ENCODE measurements at regions of chr12 and their contacts with region 1.

Region 1: DNA sequence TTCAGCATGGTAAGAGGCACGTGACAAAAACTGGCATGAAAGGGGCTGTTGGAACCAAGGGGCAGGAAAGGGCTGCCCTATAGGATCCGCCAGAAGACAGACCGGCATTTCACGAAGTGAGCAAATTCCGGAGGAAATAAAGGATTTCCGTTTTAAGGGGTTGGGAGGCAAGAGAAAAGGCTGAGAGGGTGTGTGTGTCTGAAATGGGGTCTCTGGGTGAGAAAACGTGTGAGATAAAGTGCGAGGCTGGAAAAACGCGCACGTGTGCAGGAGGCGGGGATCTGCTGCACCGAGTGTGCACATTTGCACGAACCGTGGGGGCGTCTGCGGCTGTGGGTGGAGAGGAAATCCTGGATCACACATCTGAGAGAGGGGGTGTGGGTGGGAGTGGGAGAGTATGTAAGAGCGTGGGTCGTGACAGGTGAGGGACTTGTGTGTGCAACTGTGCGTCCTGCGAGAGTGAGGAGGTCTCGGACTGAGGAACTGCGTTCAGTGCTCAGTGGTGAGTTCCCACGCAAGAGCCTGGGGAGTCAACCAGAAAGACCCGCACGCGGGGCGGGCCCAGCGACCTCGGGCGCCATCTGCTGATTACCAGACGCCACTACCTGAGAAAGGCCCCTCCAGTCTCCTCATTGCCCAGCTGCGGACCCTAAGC is 37.0 kb upstream of the P2RX7 start:
- DNase-seq: peak; percentile 74
- H3K4me3 Mint-ChIP-seq: peak overlapping the region; percentile 82
- H3K27ac Mint-ChIP-seq: peak overlapping the region; percentile 61
- H3K4me1 Mint-ChIP-seq: peaks cover 33% of the 10 kb centered on the region
- H3K27me3 Mint-ChIP-seq: peaks cover 4% of the 10 kb centered on the region

Region 2: DNA sequence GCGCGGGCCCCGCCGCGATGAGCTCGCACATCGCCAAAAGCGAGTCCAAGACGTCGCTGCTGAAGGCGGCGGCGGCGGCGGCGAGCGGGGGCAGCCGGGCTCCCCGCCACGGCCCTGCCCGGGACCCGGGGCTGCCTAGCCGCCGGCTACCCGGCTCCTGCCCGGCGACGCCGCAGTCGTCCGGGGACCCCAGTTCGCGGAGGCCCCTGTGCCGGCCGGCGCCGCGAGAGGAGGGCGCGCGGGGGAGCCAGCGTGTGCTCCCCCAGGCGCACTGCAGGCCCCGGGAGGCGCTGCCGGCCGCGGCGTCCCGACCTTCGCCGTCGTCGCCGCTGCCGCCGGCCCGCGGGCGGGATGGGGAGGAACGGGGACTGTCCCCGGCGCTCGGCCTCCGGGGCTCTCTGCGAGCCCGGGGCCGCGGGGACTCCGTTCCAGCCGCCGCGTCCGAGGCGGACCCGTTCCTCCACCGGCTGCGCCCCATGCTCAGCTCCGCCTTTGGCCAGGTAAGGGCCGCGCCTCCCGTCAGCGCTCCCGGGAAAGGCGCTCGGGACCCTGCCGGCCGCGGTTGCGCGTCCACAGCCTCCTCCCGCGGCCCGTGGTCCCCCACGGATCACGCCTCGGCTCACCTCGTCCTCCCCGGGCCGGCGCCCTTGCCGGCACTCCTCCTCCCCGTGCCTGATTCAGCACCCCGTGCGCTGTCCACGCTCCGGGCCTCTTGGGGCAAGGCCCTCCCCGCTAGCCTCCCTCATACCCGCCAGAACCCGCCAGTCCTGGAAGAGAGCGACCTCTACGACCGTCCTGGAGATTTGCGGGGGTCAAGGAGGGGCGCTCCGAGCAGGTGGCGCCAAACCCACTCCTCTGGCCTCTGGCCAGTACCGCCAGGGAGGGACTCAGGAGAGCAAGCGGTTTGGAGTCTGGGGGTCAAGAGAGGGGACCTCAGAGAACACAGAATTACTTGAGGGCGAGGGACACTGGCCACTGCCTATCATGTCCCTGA is 454.5 kb before region 1 on chr12:
- intact Hi-C with region 1: loop called (anchors 10 kb)
- DNase-seq: peak; percentile 49
- H3K4me3 Mint-ChIP-seq: peak overlapping the region; percentile 66
- H3K27ac Mint-ChIP-seq: no peak overlapping the region
- H3K4me1 Mint-ChIP-seq: peaks cover 10% of the 10 kb centered on the region
- H3K27me3 Mint-ChIP-seq: peaks cover 45% of the 10 kb centered on the region

Region 3: GRCh38 chr12:121005346-121005815 is 90.3 kb before region 1 on chr12:
- intact Hi-C with region 1: loop called (anchors 1 kb)
- DNase-seq: peak; percentile 32
- H3K4me3 Mint-ChIP-seq: no peak overlapping the region
- H3K27ac Mint-ChIP-seq: no peak overlapping the region
- H3K4me1 Mint-ChIP-seq: peaks cover 4% of the 10 kb centered on the region
- H3K27me3 Mint-ChIP-seq: no peaks in the 10 kb centered on the region

Region 4: DNA sequence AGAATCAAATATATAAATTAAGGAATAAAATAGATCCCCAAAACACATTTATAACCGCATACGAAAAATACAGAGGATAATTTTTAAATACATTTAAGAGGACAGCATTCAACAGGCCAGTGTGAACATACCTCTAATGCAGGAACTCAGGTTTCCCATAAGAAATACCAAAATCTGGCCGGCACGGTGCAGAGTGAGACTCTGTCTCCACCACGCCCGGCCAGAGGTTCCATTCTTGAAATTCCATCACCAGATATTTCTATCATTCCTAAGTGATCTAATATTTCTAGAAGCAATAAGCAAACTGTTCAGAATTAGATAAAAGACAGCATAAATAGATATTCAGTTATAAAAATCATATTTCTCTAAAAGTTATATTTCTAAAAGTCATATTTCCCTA is 26.5 kb before region 1 on chr12:
- intact Hi-C with region 1: no loop called
- DNase-seq: no peak
- H3K4me3 Mint-ChIP-seq: no peak overlapping the region
- H3K27ac Mint-ChIP-seq: no peak overlapping the region
- H3K4me1 Mint-ChIP-seq: peaks cover 11% of the 10 kb centered on the region
- H3K27me3 Mint-ChIP-seq: peaks cover 21% of the 10 kb centered on the region

Region 5: GRCh38 chr12:121230538-121230907 is 134.9 kb after region 1 on chr12:
- intact Hi-C with region 1: loop called (anchors 1 kb)
- DNase-seq: no peak
- H3K4me3 Mint-ChIP-seq: no peak overlapping the region
- H3K27ac Mint-ChIP-seq: no peak overlapping the region
- H3K4me1 Mint-ChIP-seq: peaks cover 18% of the 10 kb centered on the region
- H3K27me3 Mint-ChIP-seq: no peaks in the 10 kb centered on the region